ENCODE measurements at regions of chr4 and their contacts with region 1.

Region 1: GRCh38 chr4:72896515-72896914 is 173.0 kb downstream of the COX18 start:
- DNase-seq: peak in 1 of 2 donors; percentile 73
- H3K4me3 ChIP-seq: no peak overlapping the region
- H3K27ac ChIP-seq: peak overlapping the region; percentile 64 to 80
- H3K4me1 ChIP-seq: peaks cover 4 to 19% of the 10 kb centered on the region in 2 donors
- H3K27me3 ChIP-seq: no peaks in the 10 kb centered on the region
- CTCF ChIP-seq: no peak

Region 2: DNA sequence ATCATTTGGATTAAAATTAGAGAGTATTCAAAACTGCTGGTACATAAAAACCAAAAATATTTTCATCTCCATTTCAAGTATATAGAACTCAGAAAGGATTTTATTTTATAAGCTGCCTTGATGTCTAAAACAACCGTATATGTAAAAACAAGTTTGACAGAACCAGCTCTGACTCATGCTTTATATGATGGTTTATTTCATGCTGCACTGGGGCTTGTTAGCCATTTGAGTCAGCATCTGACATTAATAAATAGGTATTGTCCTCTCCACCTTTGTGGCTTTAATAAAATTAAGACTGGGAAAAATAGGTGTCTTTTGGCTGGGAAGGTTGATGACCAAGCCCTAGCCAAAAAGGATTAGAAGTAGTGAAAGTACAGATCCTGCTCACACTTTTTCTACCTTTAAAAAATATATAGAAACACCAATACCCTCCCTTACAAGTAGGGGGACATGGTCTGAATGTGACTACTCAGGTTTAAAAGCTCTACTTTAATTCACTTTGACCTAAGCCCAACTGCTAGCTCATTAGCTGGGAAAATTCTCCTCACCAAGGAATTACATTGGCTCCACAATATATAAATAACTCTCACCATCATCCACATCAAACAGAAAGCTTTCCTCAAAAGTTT is 555.6 kb before region 1 on chr4:
- intact Hi-C with region 1: no loop called
- DNase-seq: no peak
- H3K4me3 ChIP-seq: no peak overlapping the region
- H3K27ac ChIP-seq: peak overlapping the region; percentile 12 to 67
- H3K4me1 ChIP-seq: peaks cover 0 to 4% of the 10 kb centered on the region in 2 donors
- H3K27me3 ChIP-seq: no peaks in the 10 kb centered on the region
- CTCF ChIP-seq: no peak

Region 3: GRCh38 chr4:72767618-72768302 is 128.8 kb before region 1 on chr4:
- intact Hi-C with region 1: loop called (anchors 1 kb)
- DNase-seq: no peak
- H3K4me3 ChIP-seq: peak overlapping the region in 1 of 2 donors; percentile 52
- H3K27ac ChIP-seq: peak overlapping the region; percentile 62 to 84
- H3K4me1 ChIP-seq: no peaks in the 10 kb centered on the region
- H3K27me3 ChIP-seq: no peaks in the 10 kb centered on the region
- CTCF ChIP-seq: no peak

Region 4: GRCh38 chr4:72817012-72817411 is 79.5 kb before region 1 on chr4:
- intact Hi-C with region 1: loop called (anchors 5 kb)
- DNase-seq: no peak
- H3K4me3 ChIP-seq: no peak overlapping the region
- H3K27ac ChIP-seq: peak overlapping the region; percentile 49 to 57
- H3K4me1 ChIP-seq: peaks cover 0 to 16% of the 10 kb centered on the region in 2 donors
- H3K27me3 ChIP-seq: no peaks in the 10 kb centered on the region
- CTCF ChIP-seq: no peak

Region 5: DNA sequence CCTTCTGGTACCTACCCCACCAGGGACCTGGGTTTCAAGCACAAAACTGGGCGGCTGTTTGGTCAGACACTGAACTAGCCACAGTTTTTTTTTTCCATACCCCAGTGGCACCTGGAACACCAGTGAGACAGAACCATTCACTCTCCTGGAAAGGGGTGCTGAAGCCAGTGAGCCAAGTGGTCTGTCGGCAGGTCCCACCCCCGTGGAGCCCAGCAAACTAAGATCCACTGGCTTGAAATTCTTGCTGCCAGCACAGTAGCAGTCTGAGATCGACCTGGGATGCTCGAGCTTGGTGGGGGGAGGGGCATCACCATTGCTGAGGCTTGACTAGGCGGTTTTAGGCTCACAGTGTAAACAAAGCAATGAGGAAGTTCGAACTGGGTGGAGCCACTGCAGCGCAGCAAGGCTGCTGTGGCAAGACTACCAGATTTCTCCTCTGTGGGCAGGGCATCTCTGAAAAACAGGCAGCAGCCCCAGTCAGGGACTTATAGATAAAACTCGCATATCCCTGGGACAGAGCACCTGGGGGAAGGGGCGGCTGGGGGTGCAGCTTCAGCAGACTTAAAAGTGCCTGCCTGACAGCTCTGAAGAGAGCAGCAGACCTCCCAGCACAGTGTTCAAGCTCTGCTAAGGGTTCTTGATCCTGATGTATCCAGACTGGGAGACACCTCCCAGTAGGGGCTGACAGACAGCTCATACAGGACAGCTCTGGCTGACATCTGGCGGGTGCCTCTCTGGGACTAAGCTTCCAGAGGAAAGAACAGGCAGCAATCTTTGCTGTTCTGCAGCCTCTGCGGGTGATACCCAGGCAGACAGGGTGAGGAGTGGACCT is 50.0 kb before region 1 on chr4:
- intact Hi-C with region 1: no loop called
- DNase-seq: no peak
- H3K4me3 ChIP-seq: no peak overlapping the region
- H3K27ac ChIP-seq: no peak overlapping the region
- H3K4me1 ChIP-seq: peaks cover 0 to 7% of the 10 kb centered on the region in 2 donors
- H3K27me3 ChIP-seq: no peaks in the 10 kb centered on the region
- CTCF ChIP-seq: no peak

Region 6: GRCh38 chr4:72974694-72975487 is 78.4 kb after region 1 on chr4:
- intact Hi-C with region 1: loop called (anchors 5 kb)
- DNase-seq: no peak
- H3K4me3 ChIP-seq: no peak overlapping the region
- H3K27ac ChIP-seq: peak overlapping the region; percentile 53 to 73
- H3K4me1 ChIP-seq: peaks cover 4 to 23% of the 10 kb centered on the region in 2 donors
- H3K27me3 ChIP-seq: no peaks in the 10 kb centered on the region
- CTCF ChIP-seq: no peak

Region 7: GRCh38 chr4:73181231-73181630 is 284.7 kb after region 1 on chr4:
- intact Hi-C with region 1: no loop called
- DNase-seq: no peak
- H3K4me3 ChIP-seq: no peak overlapping the region
- H3K27ac ChIP-seq: no peak overlapping the region
- H3K4me1 ChIP-seq: no peaks in the 10 kb centered on the region
- H3K27me3 ChIP-seq: no peaks in the 10 kb centered on the region
- CTCF ChIP-seq: no peak

Region 8: GRCh38 chr4:74117024-74117534 is 1220.6 kb after region 1 on chr4:
- intact Hi-C with region 1: loop called (anchors 10 kb)
- DNase-seq: peak; percentile 41 to 86
- H3K4me3 ChIP-seq: no peak overlapping the region
- H3K27ac ChIP-seq: peak overlapping the region in 1 of 2 donors; percentile 4
- H3K4me1 ChIP-seq: peaks cover 3 to 21% of the 10 kb centered on the region in 2 donors
- H3K27me3 ChIP-seq: no peaks in the 10 kb centered on the region
- CTCF ChIP-seq: no peak

Measured in ascending aorta (tissue), 2 donors.